Dorsolateral prefrontal cortex (tissue), 120 donors: ENCODE measurements at regions of chr5 and their contacts with region 1.

Region 1: DNA sequence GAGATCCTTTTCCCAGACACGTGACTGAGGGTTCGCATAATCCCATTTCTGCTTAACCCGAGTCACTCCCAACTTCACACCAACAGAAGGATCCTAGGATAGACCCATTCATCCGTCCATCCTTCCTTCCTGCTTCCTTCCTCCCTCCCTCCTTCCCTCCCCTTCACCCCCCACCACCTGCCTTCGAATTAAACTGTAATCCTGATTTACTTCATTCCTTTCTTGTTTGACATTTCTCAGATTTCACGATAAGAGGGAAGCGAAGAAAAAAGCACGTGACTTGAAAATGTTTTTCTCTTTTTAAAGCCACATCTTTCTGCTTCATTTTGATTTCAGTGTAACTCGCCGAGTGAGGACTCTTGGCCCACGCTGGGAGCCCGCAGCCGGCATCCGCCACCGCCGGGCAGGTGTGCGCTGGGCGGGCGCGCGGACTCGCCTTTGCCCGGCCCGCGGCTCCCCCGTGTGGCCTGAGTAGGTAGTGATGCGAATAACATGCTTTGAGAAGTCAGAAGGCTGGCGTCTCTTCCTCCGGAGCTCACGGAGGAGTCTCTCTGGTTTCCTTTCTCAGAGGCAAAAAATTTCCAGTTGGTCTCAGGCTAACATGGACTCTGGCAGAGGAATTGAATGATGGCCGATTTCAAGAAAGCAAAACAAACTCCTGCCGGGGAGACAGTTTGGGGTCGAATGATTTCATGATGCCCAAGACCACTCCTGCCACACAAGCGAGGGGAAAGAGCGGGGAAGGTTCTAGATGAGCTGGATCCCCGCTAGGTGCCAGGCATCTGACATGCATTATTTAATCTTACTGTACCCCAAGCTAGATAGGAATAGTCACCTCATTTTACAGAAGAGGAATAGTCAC is 117.7 kb downstream of the SLC12A2 start:
- DNase-seq: peak; percentile 77 to 89 (median 86)
- H3K4me3 ChIP-seq: peak overlapping the region in 58 of 59 donors; percentile 6 to 59 (median 40)
- H3K27ac ChIP-seq: peak overlapping the region in 38 of 59 donors; percentile 2 to 73 (median 44)
- H3K27me3 ChIP-seq: no peaks in the 10 kb centered on the region
- CTCF ChIP-seq: peak; percentile 75 to 98 (median 94)

Region 2: DNA sequence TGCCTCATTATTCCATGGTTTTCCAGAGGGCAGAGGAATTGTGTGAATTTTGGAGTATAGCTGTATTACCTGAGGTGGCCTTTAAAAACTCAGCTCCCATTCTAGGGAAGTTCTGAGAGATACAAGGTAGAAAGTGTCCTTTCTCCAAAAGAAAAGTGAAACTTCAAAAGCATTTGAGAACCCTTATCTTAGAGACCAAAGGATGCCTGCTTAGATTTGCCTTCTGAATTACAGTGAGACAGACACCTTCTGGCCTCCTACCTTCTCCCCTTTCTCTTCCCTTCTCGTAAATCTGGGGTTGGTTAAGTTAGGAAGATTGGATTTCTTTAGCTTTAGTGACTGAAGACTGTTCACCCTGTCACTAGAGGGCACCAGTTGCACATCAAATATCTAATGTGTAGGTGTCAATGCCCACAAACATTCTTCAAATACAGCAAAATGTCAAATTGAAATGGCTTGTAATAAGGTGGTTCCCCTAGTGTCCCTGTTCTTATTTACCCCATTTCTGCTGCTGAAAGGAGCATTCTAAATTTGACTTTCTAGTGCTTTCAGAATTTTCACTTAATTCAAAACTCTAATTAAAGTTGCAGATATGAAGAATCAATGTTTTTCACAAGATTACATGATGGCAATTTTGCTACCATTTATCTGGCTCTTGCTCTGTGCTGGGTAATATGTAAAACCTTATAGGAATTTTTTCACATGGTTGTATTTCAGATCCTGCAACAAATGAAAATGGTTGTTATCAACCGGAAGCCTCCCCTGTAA is 637.1 kb before region 1 on chr5:
- intact Hi-C with region 1: loop called (anchors 5 kb)
- DNase-seq: peak in 2 of 10 donors; percentile 24 to 52
- H3K4me3 ChIP-seq: no peak overlapping the region
- H3K27ac ChIP-seq: no peak overlapping the region
- H3K27me3 ChIP-seq: peaks cover 0 to 7% (median 0%) of the 10 kb centered on the region in 45 donors
- CTCF ChIP-seq: peak; percentile 46 to 85 (median 71)

Region 3: GRCh38 chr5:127757576-127757975 is 443.7 kb before region 1 on chr5:
- intact Hi-C with region 1: loop called (anchors 5 kb)
- DNase-seq: peak in 3 of 10 donors; percentile 51 to 60 (median 52)
- H3K4me3 ChIP-seq: no peak overlapping the region
- H3K27ac ChIP-seq: no peak overlapping the region
- H3K27me3 ChIP-seq: no peaks in the 10 kb centered on the region
- CTCF ChIP-seq: peak in 55 of 56 donors; percentile 25 to 71 (median 54)

Region 4: DNA sequence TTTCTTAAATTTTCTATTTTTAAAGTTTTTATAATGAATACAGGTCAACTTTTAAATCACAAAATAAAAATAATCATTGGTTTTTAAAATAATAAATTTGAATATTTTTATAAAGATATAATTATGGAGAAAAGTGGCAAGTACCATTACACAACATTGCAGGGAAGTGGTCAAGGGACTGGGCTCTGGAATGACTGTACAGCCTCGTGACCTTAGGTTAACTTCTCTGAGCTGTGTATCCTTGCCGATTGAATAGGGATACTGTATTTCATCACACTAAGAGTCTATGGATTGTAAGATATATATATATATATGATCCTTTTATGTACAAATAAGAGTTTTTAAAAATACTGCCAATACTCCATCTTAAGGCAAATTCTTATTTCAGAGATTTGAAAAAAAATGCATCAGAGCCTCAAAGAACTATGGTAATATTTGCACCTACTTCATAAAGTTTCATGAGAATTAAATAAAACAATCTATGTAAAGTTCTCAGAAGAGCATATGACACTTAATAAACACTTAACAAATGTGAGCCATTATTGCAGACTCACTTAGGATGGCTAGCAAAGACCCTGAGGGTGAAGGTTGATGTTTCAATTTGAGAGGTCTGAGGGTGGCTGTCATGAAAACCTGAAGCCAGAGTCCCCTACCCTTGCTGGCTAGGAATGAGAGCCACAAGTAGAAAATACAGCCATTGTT is 361.6 kb before region 1 on chr5:
- intact Hi-C with region 1: loop called in 1 of 2 experiments (anchors 10 kb)
- DNase-seq: no peak
- H3K4me3 ChIP-seq: no peak overlapping the region
- H3K27ac ChIP-seq: no peak overlapping the region
- H3K27me3 ChIP-seq: no peaks in the 10 kb centered on the region
- CTCF ChIP-seq: no peak

Region 5: DNA sequence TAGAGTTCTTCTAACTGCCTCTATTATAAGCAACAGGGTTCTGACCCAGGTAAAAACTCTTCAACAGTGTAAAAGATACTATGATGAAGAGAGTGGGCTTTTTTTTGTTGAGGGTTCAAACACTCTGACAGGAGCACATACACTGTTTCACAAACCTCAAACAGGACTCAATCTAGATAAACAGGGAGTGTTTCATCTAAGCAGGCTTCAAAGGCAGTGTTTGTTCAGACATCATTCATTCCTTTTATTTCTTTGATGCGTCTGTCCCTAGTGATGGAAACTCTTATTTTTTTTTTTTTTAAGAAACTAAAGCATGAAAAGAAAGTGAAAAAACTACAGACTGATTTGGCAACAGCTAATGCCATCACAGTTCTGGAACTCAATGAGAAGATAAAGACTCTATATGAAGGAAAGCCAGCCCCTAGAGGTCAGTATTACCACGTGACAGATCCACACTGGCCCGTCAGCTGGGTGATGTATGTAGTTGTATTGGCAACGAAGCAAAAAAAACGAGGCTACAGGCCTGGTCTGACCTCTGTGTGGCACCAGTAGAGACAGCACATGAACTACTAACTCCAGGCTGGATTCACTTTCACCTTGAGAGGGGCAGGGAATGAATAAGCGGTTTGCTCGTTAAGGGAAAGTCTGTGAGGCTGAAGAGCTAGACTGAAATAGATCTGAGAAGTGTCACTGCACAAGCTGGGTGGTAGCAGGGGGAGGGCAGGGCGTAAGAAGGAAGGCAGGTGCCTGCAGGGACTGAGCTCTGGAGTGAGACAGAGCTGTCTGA is 325.9 kb before region 1 on chr5:
- intact Hi-C with region 1: loop called (anchors 1 to 10 kb)
- DNase-seq: peak in 9 of 10 donors; percentile 26 to 80 (median 54)
- H3K4me3 ChIP-seq: peak overlapping the region in 12 of 59 donors; percentile 2 to 36 (median 14)
- H3K27ac ChIP-seq: peak overlapping the region in 44 of 59 donors; percentile 2 to 78 (median 45)
- H3K27me3 ChIP-seq: no peaks in the 10 kb centered on the region
- CTCF ChIP-seq: peak; percentile 12 to 76 (median 56)

Region 6: DNA sequence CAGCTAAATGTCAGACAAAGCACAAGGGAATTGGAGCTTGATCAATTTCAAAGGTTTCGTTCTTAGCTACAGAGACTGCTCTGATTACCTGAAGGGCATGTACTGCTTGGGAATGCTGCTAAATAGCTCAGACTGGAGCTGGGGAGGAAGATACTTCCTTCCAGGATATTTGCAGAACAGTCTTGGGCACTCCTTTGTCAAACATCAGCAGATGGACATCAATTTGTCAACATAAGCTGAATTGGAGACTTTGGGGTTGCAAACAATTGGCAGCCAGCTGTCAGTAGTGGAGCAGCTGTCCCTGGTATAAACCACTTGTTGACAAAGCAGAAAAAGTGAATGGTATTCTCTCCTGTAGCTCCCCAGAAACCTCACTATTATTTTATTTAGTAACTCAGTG is 316.1 kb before region 1 on chr5:
- intact Hi-C with region 1: loop called in 1 of 2 experiments (anchors 10 kb)
- DNase-seq: no peak
- H3K4me3 ChIP-seq: no peak overlapping the region
- H3K27ac ChIP-seq: peak overlapping the region in 1 of 59 donors; percentile 39
- H3K27me3 ChIP-seq: no peaks in the 10 kb centered on the region
- CTCF ChIP-seq: no peak

Region 7: DNA sequence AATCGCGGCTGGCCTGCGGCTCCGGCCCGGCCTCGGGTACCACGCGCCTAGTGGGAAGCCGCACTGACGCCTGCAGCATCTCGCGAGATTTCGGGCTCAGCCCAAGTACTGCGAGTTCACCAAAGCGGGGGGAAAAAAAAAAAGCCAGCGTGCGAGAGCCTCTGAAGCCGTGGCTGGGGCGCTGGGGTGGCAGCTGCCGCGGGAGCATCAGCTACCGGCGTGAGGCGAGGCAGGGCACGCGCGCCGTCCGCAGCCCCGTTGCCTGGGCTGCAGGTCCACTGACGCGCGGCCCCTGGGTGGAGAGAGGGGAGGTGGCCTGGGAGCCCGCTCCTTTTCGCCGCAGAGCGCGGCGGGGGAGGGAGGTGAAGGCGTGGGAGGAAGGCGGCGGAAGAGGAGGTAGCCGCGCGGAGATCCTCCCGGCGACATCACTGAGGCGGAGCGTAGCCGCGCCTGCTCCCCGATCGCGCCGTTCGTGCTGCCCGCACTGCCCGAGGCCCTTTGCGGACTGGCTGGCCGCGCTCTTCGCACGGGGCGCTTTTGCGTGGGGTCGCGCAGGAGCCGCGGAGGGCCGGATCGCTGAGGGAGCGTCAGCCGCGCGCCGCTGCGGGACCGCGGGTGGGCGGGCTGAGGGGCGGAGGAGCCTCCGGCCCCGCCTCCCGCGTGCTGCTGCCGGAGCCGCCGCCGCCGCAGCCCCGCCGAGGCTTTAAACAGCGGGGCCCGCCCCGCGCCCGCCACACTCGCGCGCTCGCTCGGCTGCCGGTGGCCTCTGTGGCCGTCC is 118.1 kb before region 1 on chr5 and contains the start of gene SLC12A2:
- intact Hi-C with region 1: loop called (anchors 2 to 5 kb)
- DNase-seq: peak; percentile 80 to 94 (median 90)
- H3K4me3 ChIP-seq: peak within 1 kb of the TSS; percentile 64 to 98 (median 89)
- H3K27ac ChIP-seq: peak within 1 kb of the TSS; percentile 92 to 100 (median 98)
- H3K27me3 ChIP-seq: no peaks in the 10 kb centered on the region
- CTCF ChIP-seq: peak in 13 of 56 donors; percentile 6 to 43 (median 22)
- total RNA-seq, gene SLC12A2: 48.4 to 191 (median 77.9) TPM

Region 8: GRCh38 chr5:128101676-128102075 is 99.6 kb before region 1 on chr5:
- intact Hi-C with region 1: no loop called
- DNase-seq: no peak
- H3K4me3 ChIP-seq: peak overlapping the region in 10 of 59 donors; percentile 2 to 43 (median 13)
- H3K27ac ChIP-seq: peak overlapping the region in 56 of 59 donors; percentile 6 to 89 (median 68)
- H3K27me3 ChIP-seq: no peaks in the 10 kb centered on the region
- CTCF ChIP-seq: peak in 1 of 56 donors; percentile 19

Region 9: GRCh38 chr5:128121655-128122054 is 79.6 kb before region 1 on chr5:
- intact Hi-C with region 1: no loop called
- DNase-seq: no peak
- H3K4me3 ChIP-seq: no peak overlapping the region
- H3K27ac ChIP-seq: peak overlapping the region in 2 of 59 donors; percentile 7 to 40
- H3K27me3 ChIP-seq: no peaks in the 10 kb centered on the region
- CTCF ChIP-seq: no peak